Activated CD4-positive, alpha-beta T cell treated with anti-CD3 and anti-CD28 coated beads, Interleukin-2, amount 10 ng/mL, durations not matched to agents 7 days and 5 days (primary cell): ENCODE measurements at regions of chr3 and their contacts with region 1.

Region 1: DNA sequence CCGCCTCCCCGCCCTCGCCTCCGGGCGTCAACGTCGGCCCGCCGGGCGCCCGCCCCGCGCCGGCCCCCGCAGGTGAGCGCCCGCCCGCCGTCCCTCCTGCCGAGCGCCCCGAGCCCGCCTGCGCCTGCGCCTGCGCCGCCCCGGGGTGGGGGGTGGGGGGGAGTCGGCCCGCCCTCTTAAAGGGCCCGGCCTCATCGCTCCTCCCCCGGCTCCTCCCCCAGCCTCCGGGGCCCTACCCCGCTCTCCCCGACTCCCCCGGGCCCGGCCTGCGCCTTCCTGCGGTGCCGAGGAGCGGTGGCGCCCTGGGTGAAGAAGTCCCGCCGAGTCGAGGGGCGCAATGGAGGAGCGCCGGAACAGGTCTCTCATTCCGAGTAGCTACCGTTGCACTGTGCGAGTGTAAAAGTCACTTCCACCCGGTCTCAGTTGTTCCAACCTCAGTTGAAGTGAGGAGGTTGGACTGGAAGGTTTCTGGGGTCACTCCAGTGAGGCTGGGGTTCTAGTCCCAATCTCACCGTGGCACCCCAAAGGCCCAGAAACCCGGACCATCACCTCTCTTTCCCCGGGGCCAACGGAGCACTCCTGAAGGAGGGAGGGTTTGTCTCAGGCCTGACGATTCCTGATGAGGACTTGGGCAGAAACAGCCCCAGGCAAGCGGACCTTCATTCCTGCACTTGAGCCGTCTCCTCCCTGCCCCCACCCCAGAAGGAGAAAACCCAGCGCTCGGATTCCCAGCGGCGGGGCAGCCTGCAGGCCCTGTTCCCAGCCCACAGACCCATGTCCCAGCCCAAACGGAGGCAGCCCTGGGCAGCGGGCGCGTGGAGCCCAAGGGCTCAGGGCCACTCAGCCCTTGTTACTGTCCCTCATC is 1.5 kb upstream of the TNK2 start:
- DNase-seq: peak; percentile 88
- H3K4me3 Mint-ChIP-seq: peak overlapping the region; percentile 72
- H3K27ac Mint-ChIP-seq: peak overlapping the region; percentile 76
- H3K4me1 Mint-ChIP-seq: peaks cover 26% of the 10 kb centered on the region
- H3K27me3 Mint-ChIP-seq: no peaks in the 10 kb centered on the region

Region 2: GRCh38 chr3:195616712-195617086 is 293.2 kb before region 1 on chr3:
- CTCF ChIA-PET with region 1: no interaction called
- POLR2A ChIA-PET with region 1: no interaction called
- DNase-seq: no peak
- H3K4me3 Mint-ChIP-seq: no peak overlapping the region
- H3K27ac Mint-ChIP-seq: no peak overlapping the region
- H3K4me1 Mint-ChIP-seq: peaks cover 15% of the 10 kb centered on the region
- H3K27me3 Mint-ChIP-seq: no peaks in the 10 kb centered on the region

Region 3: DNA sequence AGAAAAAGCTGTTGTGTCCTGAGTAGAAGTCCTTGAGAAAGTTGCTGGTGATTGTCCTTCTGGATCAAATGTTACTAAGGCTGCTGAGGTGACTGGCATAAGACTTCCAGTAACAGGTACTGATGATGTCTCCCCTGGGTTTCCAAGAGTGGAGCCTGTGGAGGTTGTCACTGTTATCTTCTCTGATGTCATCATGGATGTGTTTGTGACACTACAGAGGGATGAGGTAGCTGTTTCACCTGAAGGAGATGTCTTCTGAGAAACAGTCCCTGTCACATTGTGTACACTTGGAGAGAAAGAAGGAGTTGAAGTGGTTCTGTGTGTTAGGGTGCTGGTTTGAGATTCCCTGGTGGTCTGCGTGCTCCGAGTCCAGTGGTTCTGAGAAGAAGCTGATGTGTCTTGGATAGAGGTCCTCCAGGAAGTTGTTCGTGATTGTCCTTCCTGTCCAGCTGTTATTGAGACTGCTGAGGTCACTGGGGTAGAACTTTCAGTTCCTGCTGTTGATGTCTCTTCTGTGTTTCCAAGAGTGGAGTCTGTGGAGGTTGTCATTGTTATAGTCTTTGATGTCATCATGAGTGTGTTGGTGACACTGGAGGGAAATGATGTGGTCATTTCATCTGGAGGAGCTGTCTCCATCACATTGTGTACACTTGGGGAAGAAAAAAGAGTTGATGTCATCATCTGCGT is 119.1 kb before region 1 on chr3:
- CTCF ChIA-PET with region 1: no interaction called
- POLR2A ChIA-PET with region 1: no interaction called
- DNase-seq: no peak
- H3K4me3 Mint-ChIP-seq: no peak overlapping the region
- H3K27ac Mint-ChIP-seq: no peak overlapping the region
- H3K4me1 Mint-ChIP-seq: peaks cover 30% of the 10 kb centered on the region
- H3K27me3 Mint-ChIP-seq: peaks cover 20% of the 10 kb centered on the region

Region 4: DNA sequence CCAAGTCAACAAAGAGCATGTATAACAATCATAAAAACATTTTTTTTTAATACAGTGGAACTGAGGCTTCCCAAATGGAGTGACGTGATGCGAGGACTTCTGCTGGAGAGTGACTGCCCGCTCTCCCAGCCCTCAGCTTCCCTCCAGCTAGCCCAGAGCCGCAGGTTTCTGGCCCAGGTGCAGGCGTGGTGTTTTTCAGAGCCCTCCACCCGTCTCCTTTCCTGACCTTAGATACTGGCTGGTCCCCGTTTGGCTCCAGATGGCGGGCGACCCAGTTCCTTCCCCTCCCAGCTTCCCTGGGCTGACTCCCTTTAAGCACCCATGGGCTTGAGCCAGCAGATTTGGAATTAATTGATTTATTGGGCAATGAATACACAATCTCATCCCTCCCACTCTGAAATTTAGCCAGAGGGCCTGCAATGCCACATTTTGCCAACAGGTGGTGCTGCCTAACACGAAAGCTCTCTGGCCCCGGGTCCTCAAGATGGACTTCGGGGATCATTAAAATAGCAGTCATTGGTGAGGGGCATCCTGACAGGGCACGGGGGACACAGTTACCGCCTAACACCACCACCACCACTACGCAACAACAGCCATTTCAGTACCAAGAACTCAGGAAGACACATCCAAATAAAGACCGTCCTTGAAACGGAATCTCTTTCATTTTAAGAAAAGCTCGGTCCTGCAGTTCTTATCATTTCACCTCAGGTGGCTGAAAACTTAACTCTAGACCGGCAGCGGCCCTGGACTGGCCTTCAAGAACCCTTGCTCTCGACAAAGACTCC is 50.6 kb before region 1 on chr3:
- CTCF ChIA-PET with region 1: interaction called, 25 read pairs
- POLR2A ChIA-PET with region 1: no interaction called
- DNase-seq: peak; percentile 77
- H3K4me3 Mint-ChIP-seq: no peak overlapping the region
- H3K27ac Mint-ChIP-seq: no peak overlapping the region
- H3K4me1 Mint-ChIP-seq: peaks cover 5% of the 10 kb centered on the region
- H3K27me3 Mint-ChIP-seq: no peaks in the 10 kb centered on the region

Region 5: DNA sequence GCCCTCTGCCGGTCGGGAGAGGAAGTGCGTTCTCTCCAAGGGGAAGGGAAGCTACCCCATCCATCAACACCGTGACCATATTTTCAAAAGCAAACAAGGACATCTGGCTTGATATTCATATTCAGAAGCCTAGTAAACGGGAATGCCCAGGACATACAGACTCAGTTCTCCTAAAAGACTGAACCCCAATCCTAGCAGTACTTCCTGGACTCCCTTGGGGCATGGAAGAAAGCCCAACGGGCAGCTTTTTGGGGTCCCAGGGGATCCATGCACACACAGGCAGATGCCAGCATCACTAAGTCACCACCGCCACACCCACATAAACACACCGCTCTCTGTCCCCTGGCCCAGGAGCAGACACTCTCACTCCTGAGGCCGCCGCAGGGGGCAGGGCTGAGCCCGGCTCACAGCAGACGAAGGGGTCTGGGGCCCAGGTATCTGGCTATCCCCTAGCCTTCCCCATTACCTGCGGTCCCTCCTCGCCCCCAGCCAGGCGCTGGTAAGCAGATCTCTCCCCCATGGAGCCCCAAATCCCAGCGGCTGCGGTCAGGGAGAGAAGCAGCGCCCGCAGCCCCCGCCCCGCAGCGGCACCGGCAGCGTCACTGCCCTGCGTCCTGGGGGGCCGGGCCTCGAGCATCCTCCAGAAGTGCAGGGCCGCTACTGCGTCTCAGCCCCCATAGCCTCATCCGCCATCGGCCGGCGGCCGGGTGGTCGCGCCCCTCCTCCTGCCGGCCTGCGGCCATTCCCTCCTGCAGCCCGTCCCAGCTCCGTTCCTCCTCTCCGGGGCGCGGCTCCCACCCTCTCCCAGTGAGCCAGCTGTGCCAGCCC is 14.9 kb before region 1 on chr3:
- CTCF ChIA-PET with region 1: interaction called, 128 read pairs
- POLR2A ChIA-PET with region 1: interaction called, 6 read pairs
- DNase-seq: peak; percentile 71
- H3K4me3 Mint-ChIP-seq: peak overlapping the region; percentile 87
- H3K27ac Mint-ChIP-seq: peak overlapping the region; percentile 87
- H3K4me1 Mint-ChIP-seq: peaks cover 44% of the 10 kb centered on the region
- H3K27me3 Mint-ChIP-seq: no peaks in the 10 kb centered on the region

Region 6: GRCh38 chr3:195932456-195933430 is 22.9 kb after region 1 on chr3:
- CTCF ChIA-PET with region 1: interaction called, 10 read pairs
- POLR2A ChIA-PET with region 1: no interaction called
- DNase-seq: no peak
- H3K4me3 Mint-ChIP-seq: no peak overlapping the region
- H3K27ac Mint-ChIP-seq: no peak overlapping the region
- H3K4me1 Mint-ChIP-seq: no peaks in the 10 kb centered on the region
- H3K27me3 Mint-ChIP-seq: no peaks in the 10 kb centered on the region